Panc1 (cell line): ENCODE measurements at regions of chr15 and their contacts with region 1.

Region 1: DNA sequence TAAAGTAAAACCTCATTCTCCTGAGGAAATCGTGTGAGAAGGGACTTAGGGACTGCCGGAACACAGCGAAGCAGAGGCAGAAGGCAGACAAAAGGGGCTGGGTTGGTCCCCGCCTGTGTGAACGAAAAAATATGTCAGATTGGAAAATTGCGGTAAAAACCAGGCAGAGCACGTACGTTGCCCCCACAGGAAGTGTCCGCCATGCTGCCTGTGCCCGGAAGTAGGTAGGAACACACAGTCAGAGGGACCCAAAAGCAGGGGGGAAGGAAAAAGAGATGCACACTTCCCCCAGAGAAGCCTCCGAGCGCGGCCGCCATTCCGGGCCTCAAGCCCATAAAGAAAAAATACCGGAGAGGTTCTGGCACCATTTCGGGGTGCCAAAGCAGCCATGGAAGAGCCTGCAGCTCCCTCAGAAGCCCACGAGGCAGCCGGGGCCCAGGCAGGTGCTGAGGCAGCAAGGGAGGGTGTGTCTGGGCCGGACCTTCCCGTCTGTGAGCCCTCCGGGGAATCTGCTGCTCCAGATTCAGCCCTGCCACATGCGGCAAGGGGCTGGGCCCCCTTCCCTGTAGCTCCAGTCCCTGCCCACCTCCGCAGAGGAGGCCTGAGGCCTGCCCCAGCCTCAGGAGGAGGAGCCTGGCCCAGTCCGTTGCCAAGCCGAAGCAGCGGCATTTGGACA is at the start of gene MKRN3:
- DNase-seq: peak; percentile 66
- ATAC-seq: peak; percentile 87
- H3K4me3 ChIP-seq: peak within 1 kb of the TSS; percentile 86 to 92
- H3K27ac ChIP-seq: peak within 1 kb of the TSS; percentile 95
- H3K4me1 ChIP-seq: peaks cover 8% of the 10 kb centered on the region; the same call in 1 of the 2 replicates
- H3K27me3 ChIP-seq: no peaks in the 10 kb centered on the region
- CTCF ChIP-seq: no peak
- total RNA-seq, gene MKRN3: 7.9 TPM

Region 2: DNA sequence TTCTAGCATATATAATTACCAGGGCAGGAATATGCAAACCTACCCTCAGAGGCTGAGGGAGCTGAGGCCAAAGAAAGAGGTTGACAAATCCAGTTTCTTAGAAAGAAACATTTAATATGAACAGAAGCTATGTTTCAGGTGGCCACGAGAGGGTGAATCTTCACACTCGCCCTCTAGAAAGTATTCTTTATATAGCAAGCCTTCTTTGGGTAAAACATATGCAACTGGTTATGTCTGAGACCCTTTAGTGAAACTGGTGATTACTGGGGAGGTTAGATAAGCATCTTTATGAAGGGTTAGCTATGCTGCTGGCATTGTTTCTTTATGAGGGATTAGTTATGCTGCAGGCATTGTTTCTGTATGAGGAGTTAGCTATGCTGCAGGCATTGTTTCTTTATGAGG is 67.8 kb before region 1 on chr15:
- CTCF ChIA-PET with region 1: interaction called, 3 read pairs
- POLR2A ChIA-PET with region 1: no interaction called
- in situ Hi-C with region 1: no loop called
- intact Hi-C with region 1: loop called (anchors 10 kb)
- DNase-seq: peak; percentile 5
- ATAC-seq: no peak
- H3K4me3 ChIP-seq: no peak overlapping the region
- H3K27ac ChIP-seq: no peak overlapping the region
- H3K4me1 ChIP-seq: no peaks in the 10 kb centered on the region
- H3K27me3 ChIP-seq: no peaks in the 10 kb centered on the region
- CTCF ChIP-seq: peak; percentile 53; the same call in 1 of the 2 replicates